ENCODE measurements at regions of chr16 and their contacts with region 1.

Region 1: GRCh38 chr16:31713071-31713944 is 160.3 kb upstream of the ZNF267 start:
- DNase-seq: peak; percentile 84 to 94 (median 92)
- ATAC-seq: peak; percentile 94
- H3K4me3 ChIP-seq: peak overlapping the region; percentile 84 to 100
- H3K4me3 Mint-ChIP-seq: peak overlapping the region; percentile 98
- H3K27ac ChIP-seq: peak overlapping the region; percentile 83 to 98
- H3K27ac Mint-ChIP-seq: peak overlapping the region; percentile 97
- H3K4me1 ChIP-seq: peaks cover 50% of the 10 kb centered on the region
- H3K4me1 Mint-ChIP-seq: peaks cover 68% of the 10 kb centered on the region
- H3K27me3 ChIP-seq: no peaks in the 10 kb centered on the region
- H3K27me3 Mint-ChIP-seq: no peaks in the 10 kb centered on the region
- CTCF ChIP-seq: no peak

Region 2: GRCh38 chr16:31695667-31696066 is 17.6 kb before region 1 on chr16:
- CTCF ChIA-PET with region 1: interaction called, 8 read pairs
- POLR2A ChIA-PET with region 1: interaction called, 25 read pairs
- intact Hi-C with region 1: loop called (anchors 1 kb)
- DNase-seq: peak in 8 of 9 experiments; percentile 25 to 91 (median 60)
- ATAC-seq: peak; percentile 84
- H3K4me3 ChIP-seq: no peak overlapping the region
- H3K4me3 Mint-ChIP-seq: no peak overlapping the region
- H3K27ac ChIP-seq: peak overlapping the region; percentile 36 to 64
- H3K27ac Mint-ChIP-seq: no peak overlapping the region
- H3K4me1 ChIP-seq: peaks cover 23% of the 10 kb centered on the region
- H3K4me1 Mint-ChIP-seq: peaks cover 10% of the 10 kb centered on the region
- H3K27me3 ChIP-seq: no peaks in the 10 kb centered on the region
- H3K27me3 Mint-ChIP-seq: no peaks in the 10 kb centered on the region
- CTCF ChIP-seq: no peak

Region 3: DNA sequence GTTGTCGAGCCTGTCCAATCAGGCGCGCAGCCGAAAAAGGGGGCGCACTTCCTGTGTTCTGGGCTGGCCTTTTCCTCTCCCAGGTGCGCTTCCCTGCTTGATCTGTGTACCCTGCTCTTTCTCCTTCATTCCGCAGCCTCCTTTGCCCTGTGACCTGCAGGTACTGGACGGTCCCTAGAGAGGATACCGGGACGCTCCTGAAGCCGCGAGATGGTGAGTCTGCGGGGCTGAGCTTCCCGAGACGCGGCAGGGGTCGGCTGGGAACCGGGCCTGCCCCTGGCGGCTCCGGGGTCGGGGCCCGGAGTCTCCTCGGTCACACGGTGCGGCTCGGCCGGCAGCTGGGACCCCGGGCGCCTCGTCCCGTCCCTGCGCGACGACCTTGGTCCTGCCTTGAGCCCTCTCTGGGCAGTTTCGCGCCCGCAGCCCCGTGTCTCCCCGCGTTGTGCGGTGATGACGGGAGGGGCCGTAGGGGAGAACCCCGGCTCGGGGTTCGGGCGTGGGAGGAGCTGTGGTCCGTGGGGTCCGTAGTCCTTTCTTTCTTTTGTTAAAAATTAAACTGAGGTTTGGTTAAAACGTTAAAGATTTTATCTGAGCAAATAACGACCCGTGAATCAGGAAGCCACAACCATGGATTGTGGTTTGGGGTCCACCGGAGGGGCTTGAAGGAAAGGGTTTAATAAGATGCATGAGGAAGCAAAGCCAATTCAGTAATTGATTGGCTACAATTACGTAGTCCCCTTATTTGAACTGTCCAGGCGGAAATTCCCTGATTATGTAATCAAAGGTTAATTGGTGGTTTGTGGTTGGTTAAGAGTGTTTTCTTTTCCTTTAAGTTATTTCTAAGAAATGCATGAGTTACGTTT is 12.6 kb before region 1 on chr16:
- CTCF ChIA-PET with region 1: interaction called, 8 read pairs
- POLR2A ChIA-PET with region 1: interaction called, 25 read pairs
- intact Hi-C with region 1: loop called (anchors 1 kb)
- DNase-seq: peak; percentile 79 to 94 (median 90)
- ATAC-seq: peak; percentile 86
- H3K4me3 ChIP-seq: peak overlapping the region; percentile 76 to 94
- H3K4me3 Mint-ChIP-seq: peak overlapping the region; percentile 95
- H3K27ac ChIP-seq: peak overlapping the region; percentile 90 to 91
- H3K27ac Mint-ChIP-seq: peak overlapping the region; percentile 97
- H3K4me1 ChIP-seq: peaks cover 28% of the 10 kb centered on the region
- H3K4me1 Mint-ChIP-seq: peaks cover 31% of the 10 kb centered on the region
- H3K27me3 ChIP-seq: no peaks in the 10 kb centered on the region
- H3K27me3 Mint-ChIP-seq: no peaks in the 10 kb centered on the region
- CTCF ChIP-seq: no peak

Region 4: GRCh38 chr16:31868691-31869167 is 155.4 kb after region 1 on chr16:
- CTCF ChIA-PET with region 1: interaction called, 4 read pairs
- POLR2A ChIA-PET with region 1: interaction called, 7 read pairs
- intact Hi-C with region 1: loop called (anchors 5 kb)
- DNase-seq: peak; percentile 60 to 88 (median 82)
- ATAC-seq: peak; percentile 20
- H3K4me3 ChIP-seq: peak overlapping the region; percentile 33 to 48
- H3K4me3 Mint-ChIP-seq: peak overlapping the region; percentile 66
- H3K27ac ChIP-seq: peak overlapping the region; percentile 18 to 79
- H3K27ac Mint-ChIP-seq: peak overlapping the region; percentile 88
- H3K4me1 ChIP-seq: peaks cover 31% of the 10 kb centered on the region
- H3K4me1 Mint-ChIP-seq: peaks cover 47% of the 10 kb centered on the region
- H3K27me3 ChIP-seq: no peaks in the 10 kb centered on the region
- H3K27me3 Mint-ChIP-seq: no peaks in the 10 kb centered on the region
- CTCF ChIP-seq: peak; percentile 96

Measured in CD8-positive, alpha-beta T cell (primary cell).